ENCODE measurements at regions of chr16 and their contacts with region 1.

Region 1: DNA sequence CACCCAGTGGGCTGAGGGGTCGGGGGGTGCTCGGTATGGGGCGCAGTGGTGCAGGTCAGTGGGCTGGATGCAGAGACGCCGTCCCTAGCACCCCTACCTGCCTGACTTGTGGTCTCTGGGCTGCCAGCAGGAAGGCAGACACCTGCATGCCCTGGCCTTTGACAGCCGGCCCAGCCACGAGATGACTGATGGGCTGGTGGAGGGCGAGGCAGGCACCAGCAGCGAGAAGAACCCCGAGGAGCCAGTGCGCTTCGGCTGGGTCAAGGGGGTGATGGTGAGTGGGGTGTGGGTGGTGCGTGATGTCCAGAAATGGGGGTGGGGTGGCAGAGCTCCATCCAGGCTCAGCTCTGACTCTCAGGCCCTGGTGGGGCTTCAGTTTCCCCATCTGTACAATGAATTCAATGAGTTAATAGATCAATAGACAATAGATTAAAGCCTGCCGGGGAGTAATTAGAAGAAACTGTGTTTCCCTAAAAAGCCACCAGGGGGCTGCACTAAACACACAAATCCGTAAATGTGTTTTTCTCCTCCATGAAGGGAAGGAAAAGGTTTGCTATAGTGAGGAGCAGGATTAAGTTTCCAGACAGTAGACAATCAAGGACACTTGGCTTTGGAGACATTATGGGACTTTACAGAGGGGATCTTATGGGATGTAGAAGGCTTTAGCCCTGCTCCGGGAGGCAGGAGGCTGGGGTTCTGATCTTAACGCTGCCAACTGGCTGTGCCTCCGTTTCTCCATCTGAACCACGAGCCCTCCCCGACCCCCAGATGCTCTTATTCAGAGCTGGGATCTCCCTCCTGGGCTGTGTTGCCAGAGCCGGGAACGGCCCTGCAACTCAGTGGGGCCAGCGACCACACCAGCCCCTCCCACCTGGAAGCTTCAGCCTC is 2.2 kb downstream of the SLC12A3 start:
- DNase-seq: no peak
- H3K4me3 ChIP-seq: no peak overlapping the region
- H3K27ac ChIP-seq: no peak overlapping the region
- H3K4me1 ChIP-seq: peaks cover 4 to 9% (median 7%) of the 10 kb centered on the region in 4 donors
- H3K27me3 ChIP-seq: no peaks in the 10 kb centered on the region
- CTCF ChIP-seq: peak; percentile 72 to 82 (median 72)
- EP300 ChIP-seq: no peak
- POLR2A ChIP-seq: no peak

Region 2: GRCh38 chr16:56931892-56932720 is 64.9 kb after region 1 on chr16 and contains the start of gene HERPUD1:
- intact Hi-C with region 1: loop called (anchors 5 kb)
- DNase-seq: peak; percentile 100
- H3K4me3 ChIP-seq: peak within 1 kb of the TSS; percentile 78 to 99 (median 85)
- H3K27ac ChIP-seq: peak within 1 kb of the TSS; percentile 97 to 100 (median 98)
- H3K4me1 ChIP-seq: peaks cover 43 to 53% (median 48%) of the 10 kb centered on the region in 4 donors
- H3K27me3 ChIP-seq: no peaks in the 10 kb centered on the region
- CTCF ChIP-seq: no peak
- EP300 ChIP-seq: no peak
- POLR2A ChIP-seq: peak; percentile 82
- total RNA-seq, gene HERPUD1: 64.0 to 99.7 (median 71.5) TPM

Region 3: DNA sequence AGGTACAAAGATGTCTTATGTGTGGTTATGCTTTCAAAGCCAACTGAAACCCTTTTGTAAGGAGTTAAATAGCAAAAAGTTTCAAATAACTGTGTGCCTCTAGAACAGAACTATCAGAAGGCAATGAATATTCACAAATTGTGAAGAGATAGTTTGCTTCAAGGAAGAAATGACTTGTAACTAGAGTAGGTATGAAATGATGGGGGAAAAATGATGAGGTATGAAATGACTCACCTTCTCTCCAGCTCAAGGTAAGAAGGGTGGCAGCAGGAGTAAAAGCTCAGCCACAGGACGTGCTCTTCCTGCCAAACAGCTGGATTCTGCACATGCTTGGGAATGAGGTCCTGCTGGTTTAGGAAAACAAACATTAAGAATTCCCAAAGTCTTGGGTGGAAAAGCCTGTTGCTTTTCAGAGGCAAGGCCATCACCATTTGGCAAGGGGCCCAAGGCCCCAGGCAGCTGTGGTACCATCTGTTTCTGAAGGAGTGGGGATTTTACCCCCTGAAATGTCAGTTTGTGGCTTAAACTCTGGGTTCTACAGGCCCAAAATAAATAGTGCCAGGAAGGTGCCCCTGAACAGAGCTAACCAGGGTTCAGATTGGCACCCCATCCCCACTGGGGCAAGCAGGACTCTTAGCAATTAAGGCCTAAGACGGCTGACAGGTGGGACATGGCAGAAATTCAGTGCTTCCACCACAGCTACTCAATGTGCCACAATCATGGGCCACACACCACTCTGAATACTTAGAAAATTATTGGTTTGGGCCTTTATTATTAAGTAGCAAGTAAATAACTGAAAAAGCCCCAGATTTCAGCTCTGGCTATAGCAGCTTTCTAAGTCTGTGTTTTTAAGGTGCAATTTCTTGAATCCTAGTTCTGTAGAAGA is 78.0 kb after region 1 on chr16:
- intact Hi-C with region 1: loop called (anchors 5 kb)
- DNase-seq: no peak
- H3K4me3 ChIP-seq: no peak overlapping the region
- H3K27ac ChIP-seq: no peak overlapping the region
- H3K4me1 ChIP-seq: peaks cover 0 to 10% (median 2%) of the 10 kb centered on the region in 4 donors
- H3K27me3 ChIP-seq: no peaks in the 10 kb centered on the region
- CTCF ChIP-seq: no peak
- EP300 ChIP-seq: no peak
- POLR2A ChIP-seq: no peak

Region 4: GRCh38 chr16:56956756-56957155 is 89.6 kb after region 1 on chr16:
- intact Hi-C with region 1: no loop called
- DNase-seq: no peak
- H3K4me3 ChIP-seq: no peak overlapping the region
- H3K27ac ChIP-seq: no peak overlapping the region
- H3K4me1 ChIP-seq: peaks cover 1 to 17% (median 14%) of the 10 kb centered on the region in 4 donors
- H3K27me3 ChIP-seq: no peaks in the 10 kb centered on the region
- CTCF ChIP-seq: no peak
- EP300 ChIP-seq: no peak
- POLR2A ChIP-seq: no peak

Region 5: DNA sequence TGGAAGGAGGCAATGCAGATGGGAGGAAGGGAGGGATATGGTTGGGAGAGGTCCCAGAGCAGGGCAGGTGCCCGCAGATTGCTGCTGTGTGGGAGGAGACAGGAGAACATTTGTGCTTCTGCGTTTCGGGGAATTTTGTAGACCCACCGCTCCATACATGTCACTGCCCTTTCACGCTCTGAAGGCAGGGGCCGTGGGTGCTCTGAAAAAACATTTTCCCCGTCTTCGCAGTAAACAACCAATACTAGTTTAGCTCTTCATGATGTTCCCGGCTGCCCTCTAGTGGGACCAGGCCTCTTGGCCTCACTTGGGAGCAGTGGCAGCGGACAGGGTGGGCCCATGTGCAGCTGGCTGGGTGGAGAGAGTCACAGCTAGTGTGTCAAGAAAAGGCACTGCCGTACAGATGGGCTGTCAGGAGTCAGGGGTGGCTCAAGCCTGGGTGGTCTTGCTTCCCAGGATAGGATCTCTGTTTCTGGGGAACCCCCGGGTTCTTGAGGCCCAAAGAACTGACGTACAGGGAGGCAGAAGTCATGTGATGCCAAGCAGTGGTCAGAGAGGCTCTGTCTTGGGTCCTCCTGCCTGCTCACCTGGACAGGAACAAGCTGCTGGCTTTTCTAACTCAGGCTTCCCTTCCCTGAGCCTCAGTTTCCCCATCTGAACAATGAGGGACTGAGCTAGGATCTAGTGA is 178.7 kb after region 1 on chr16:
- intact Hi-C with region 1: loop called (anchors 5 kb)
- DNase-seq: no peak
- H3K4me3 ChIP-seq: peak overlapping the region in 1 of 4 donors; percentile 24
- H3K27ac ChIP-seq: peak overlapping the region in 1 of 4 donors; percentile 7
- H3K4me1 ChIP-seq: peaks cover 9 to 17% (median 12%) of the 10 kb centered on the region in 4 donors
- H3K27me3 ChIP-seq: no peaks in the 10 kb centered on the region
- CTCF ChIP-seq: peak; percentile 31 to 57 (median 37)
- EP300 ChIP-seq: no peak
- POLR2A ChIP-seq: no peak

Measured in esophagus muscularis mucosa (tissue), 4 donors.